ENCODE measurements at regions of chr10 and their contacts with region 1.

Region 1: DNA sequence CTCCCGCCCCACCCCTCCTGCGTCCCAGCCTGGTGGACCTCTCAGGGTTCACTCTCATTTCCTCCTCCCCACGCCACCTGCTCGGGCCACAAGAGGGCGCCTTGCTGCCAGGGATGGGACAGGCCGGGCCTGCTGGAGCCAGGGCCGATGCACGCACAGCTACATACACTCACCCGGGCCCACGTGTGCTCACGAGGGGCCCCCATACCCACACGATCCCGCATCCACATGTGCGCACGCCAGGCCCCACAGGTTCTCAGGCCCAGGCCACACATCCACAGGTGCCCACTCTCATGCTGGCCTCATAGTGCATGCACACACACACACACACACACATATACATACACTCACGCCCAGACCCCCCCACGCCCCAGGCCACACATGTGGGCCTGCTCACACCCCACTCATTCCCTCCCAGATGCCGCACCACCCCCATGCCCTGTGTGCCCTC is 68.6 kb downstream of the LHPP start:
- DNase-seq: peak; percentile 85 to 87
- H3K4me3 ChIP-seq: no peak overlapping the region
- H3K27ac ChIP-seq: no peak overlapping the region
- H3K4me1 ChIP-seq: peaks cover 0 to 7% (median 3%) of the 10 kb centered on the region in 4 donors
- H3K27me3 ChIP-seq: no peaks in the 10 kb centered on the region
- CTCF ChIP-seq: peak; percentile 87 to 90

Region 2: DNA sequence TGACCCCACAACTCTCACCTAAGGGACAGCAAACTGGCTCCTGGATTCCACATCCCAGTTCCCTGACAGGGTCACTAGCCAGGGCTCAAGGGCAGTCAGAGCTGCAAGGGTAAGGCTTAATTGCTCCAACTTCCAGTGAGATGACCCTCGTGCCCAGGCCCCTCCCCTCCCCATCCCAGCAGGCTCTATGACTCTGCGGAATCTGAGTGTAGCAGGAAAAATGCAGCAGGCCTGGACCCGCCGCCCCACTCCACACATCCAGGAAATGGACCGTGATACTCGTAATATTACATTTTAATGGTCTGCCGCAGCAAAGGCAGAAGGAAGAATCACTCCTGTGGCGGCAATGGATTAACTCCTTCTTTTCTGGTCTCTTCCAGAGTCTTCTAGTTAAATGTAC is 345.2 kb before region 1 on chr10:
- intact Hi-C with region 1: no loop called
- DNase-seq: no peak
- H3K4me3 ChIP-seq: no peak overlapping the region
- H3K27ac ChIP-seq: no peak overlapping the region
- H3K4me1 ChIP-seq: peaks cover 0 to 30% (median 12%) of the 10 kb centered on the region in 4 donors
- H3K27me3 ChIP-seq: no peaks in the 10 kb centered on the region
- CTCF ChIP-seq: no peak

Region 3: DNA sequence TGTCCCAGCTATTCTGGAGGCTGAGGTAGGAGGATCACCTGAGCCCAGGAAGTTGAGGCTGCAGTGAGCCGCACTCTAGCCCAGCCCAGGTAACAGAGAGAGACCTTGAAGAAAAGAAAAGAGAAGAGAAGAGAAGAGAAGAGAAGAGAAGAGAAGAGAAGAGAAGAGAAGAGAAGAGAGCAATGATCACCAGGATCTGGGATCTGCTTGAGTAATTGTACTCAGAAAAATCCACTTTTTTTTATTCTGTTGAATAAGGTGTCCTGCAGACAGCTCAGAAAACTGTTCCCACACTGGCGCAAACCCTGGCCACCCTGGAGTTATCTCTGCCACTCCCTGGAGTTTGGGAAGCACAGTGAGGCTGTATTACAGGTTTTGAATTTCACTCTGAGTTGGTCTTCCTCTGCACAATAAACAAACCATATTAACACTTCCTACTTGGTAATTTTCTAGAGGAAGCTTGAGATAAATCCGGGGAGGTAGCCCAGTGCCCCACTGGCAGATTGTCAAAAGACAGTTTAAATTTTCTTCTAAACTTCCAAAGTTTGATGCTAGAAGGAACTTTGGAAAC is 101.9 kb before region 1 on chr10:
- intact Hi-C with region 1: no loop called
- DNase-seq: no peak
- H3K4me3 ChIP-seq: no peak overlapping the region
- H3K27ac ChIP-seq: no peak overlapping the region
- H3K4me1 ChIP-seq: no peaks in the 10 kb centered on the region
- H3K27me3 ChIP-seq: peaks cover 0 to 23% of the 10 kb centered on the region in 2 donors
- CTCF ChIP-seq: no peak

Region 4: GRCh38 chr10:124741281-124741921 is 211.2 kb after region 1 on chr10:
- intact Hi-C with region 1: loop called (anchors 2 kb)
- DNase-seq: peak; percentile 86 to 88
- H3K4me3 ChIP-seq: peak overlapping the region in 1 of 2 donors; percentile 65
- H3K27ac ChIP-seq: peak overlapping the region; percentile 39 to 59
- H3K4me1 ChIP-seq: peaks cover 0 to 59% (median 45%) of the 10 kb centered on the region in 4 donors
- H3K27me3 ChIP-seq: no peaks in the 10 kb centered on the region
- CTCF ChIP-seq: peak; percentile 77 to 91

Region 5: DNA sequence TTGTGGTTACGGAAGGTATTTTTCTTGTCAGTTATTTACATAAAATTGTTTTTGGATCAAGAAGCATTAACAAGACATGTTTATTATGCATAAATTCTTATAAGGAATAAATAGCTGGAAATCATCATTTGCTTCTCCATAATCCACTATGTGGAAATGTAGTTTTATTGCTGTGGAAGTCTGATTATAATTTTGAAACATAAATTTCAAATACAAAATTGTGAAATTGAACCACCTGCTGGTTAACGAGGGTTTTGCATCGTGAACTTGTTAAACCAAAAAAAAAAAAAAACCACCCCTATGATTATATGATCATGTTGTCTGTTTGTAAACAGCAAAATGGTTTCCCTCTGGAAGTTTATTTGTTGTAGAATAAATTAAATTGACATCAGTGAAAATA is 297.2 kb after region 1 on chr10:
- intact Hi-C with region 1: loop called (anchors 10 kb)
- DNase-seq: no peak
- H3K4me3 ChIP-seq: no peak overlapping the region
- H3K27ac ChIP-seq: no peak overlapping the region
- H3K4me1 ChIP-seq: no peaks in the 10 kb centered on the region
- H3K27me3 ChIP-seq: no peaks in the 10 kb centered on the region
- CTCF ChIP-seq: peak; percentile 45 to 49